ENCODE measurements at regions of chr1 and their contacts with region 1.

Region 1: GRCh38 chr1:91165033-91165654 is 143.3 kb upstream of the ZNF644 start:
- DNase-seq: peak; percentile 72
- H3K4me3 Mint-ChIP-seq: no peak overlapping the region
- H3K27ac Mint-ChIP-seq: no peak overlapping the region
- H3K4me1 Mint-ChIP-seq: no peaks in the 10 kb centered on the region
- H3K27me3 Mint-ChIP-seq: no peaks in the 10 kb centered on the region

Region 2: DNA sequence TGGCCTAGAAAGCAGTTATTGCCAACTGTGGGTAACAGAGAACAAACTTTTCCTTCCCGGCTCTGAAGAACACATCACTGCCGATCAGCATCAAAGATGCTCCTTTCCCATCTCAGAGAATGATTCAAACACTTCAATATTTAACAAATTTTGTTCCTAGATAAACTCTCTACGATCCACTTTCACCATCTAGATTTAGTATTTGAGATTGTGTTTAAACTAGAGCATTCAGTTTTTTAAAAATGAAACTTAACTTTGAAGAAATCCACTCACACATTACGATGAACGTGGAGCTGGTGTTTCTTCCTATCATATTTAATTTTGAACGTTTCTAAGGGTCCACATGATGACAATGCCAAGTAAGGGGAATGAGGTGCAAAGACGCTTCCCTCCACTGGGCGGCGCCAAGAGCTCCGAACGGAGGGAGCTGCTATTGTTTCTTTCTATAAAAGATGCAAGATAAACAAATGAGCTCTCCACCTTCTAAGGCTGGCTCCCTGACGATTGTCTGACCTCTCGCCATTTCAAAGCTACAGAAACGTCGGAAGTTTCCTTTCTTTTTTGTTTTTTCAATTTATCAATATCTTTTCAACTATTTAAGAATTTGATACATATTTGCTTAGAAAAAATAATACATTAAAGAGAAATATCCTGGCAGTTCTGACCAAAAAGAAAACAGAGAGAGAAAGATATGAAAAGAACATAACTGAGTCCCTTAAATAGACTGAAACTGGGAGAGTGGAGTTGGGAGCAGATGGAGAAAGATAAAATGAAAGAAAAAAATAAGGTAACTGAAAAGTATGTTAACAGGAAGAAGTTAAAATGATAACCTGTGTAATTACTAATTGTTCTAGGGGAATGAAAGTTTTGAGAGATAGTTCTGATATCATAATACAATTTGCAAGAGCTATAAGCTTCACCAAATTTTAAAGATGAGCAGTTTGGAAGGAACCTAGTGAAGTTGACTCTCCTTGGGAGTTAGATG is 443.6 kb before region 1 on chr1:
- CTCF ChIA-PET with region 1: interaction called, 39 read pairs
- POLR2A ChIA-PET with region 1: no interaction called
- DNase-seq: peak; percentile 67
- H3K4me3 Mint-ChIP-seq: no peak overlapping the region
- H3K27ac Mint-ChIP-seq: peak overlapping the region; percentile 27
- H3K4me1 Mint-ChIP-seq: peaks cover 44% of the 10 kb centered on the region
- H3K27me3 Mint-ChIP-seq: peaks cover 87% of the 10 kb centered on the region

Region 3: GRCh38 chr1:90768098-90768497 is 397.0 kb before region 1 on chr1:
- CTCF ChIA-PET with region 1: no interaction called
- POLR2A ChIA-PET with region 1: no interaction called
- DNase-seq: no peak
- H3K4me3 Mint-ChIP-seq: no peak overlapping the region
- H3K27ac Mint-ChIP-seq: no peak overlapping the region
- H3K4me1 Mint-ChIP-seq: peaks cover 3% of the 10 kb centered on the region
- H3K27me3 Mint-ChIP-seq: peaks cover 4% of the 10 kb centered on the region

Region 4: DNA sequence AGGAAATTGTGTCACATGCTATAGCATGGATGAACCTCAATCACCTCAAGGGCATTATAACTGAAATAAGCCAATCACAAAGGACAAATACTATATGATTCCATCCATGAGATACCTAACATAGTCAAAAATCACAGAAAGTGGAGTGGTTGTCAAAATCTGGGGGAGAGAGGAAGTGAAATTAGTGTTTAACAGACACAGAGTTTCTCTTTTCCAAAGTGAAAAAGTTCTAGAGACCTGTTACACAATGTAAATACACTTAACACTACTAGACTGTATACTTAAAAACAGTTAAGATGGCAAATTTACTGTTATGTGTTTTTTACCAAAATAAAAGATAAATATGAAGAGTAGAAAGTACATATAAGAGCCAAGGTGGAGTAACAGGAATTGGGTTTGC is 175.2 kb before region 1 on chr1:
- CTCF ChIA-PET with region 1: no interaction called
- POLR2A ChIA-PET with region 1: no interaction called
- DNase-seq: no peak
- H3K4me3 Mint-ChIP-seq: no peak overlapping the region
- H3K27ac Mint-ChIP-seq: no peak overlapping the region
- H3K4me1 Mint-ChIP-seq: peaks cover 21% of the 10 kb centered on the region
- H3K27me3 Mint-ChIP-seq: no peaks in the 10 kb centered on the region

Region 5: GRCh38 chr1:91141858-91142257 is 23.3 kb before region 1 on chr1:
- CTCF ChIA-PET with region 1: interaction called, 14 read pairs
- POLR2A ChIA-PET with region 1: no interaction called
- DNase-seq: no peak
- H3K4me3 Mint-ChIP-seq: no peak overlapping the region
- H3K27ac Mint-ChIP-seq: no peak overlapping the region
- H3K4me1 Mint-ChIP-seq: no peaks in the 10 kb centered on the region
- H3K27me3 Mint-ChIP-seq: no peaks in the 10 kb centered on the region

Region 6: DNA sequence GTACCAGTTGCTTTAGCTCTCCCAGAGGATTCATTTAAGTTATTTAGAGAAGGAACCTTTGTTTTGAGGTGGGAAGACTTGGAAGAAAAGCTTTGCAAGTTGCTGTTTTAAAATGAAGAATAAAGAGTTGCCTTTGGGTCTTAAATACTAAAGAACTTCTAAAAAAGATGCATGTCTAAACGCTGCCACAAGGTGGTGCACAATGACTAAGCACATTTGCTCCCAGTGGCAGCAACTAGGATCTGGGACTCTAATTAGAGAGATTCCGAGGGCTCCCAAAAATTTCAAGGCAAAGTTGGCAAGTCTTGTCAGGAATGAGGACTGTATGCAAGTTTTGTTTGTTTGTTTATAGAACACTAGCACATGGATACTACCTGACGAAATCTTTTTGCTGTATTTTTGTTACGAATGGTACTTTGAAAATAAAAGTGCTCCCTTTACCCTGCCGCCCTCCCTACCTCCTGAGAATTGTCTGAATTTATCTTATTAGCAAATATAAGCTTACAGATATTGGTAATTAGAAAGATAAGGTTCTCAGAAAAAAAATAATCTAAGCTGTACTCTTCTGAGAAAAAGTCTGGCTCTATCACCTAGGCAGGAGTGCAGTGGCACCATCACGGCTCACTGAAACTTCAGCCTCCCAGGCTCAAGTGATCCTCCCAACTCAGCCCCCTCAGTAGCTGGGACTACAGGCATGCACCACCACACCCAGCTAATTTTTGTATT is 117.7 kb after region 1 on chr1:
- CTCF ChIA-PET with region 1: interaction called, 19 read pairs
- POLR2A ChIA-PET with region 1: no interaction called
- DNase-seq: peak; percentile 42
- H3K4me3 Mint-ChIP-seq: no peak overlapping the region
- H3K27ac Mint-ChIP-seq: no peak overlapping the region
- H3K4me1 Mint-ChIP-seq: no peaks in the 10 kb centered on the region
- H3K27me3 Mint-ChIP-seq: peaks cover 8% of the 10 kb centered on the region

Measured in activated CD4-positive, alpha-beta memory T cell treated with anti-CD3 and anti-CD28 coated beads, Interleukin-2, amount 10 ng/mL, durations not matched to agents 7 days and 5 days (primary cell).